CD14-positive monocyte (primary cell): ENCODE measurements at regions of chr1 and their contacts with region 1.

Region 1: GRCh38 chr1:119549719-119550132 is 42.7 kb downstream of the HSD3B1 start:
- DNase-seq: peak; percentile 69 to 72 (median 69)
- H3K4me3 ChIP-seq: no peak overlapping the region
- H3K4me3 Mint-ChIP-seq: no peak overlapping the region
- H3K27ac ChIP-seq: no peak overlapping the region
- H3K27ac Mint-ChIP-seq: peak overlapping the region in 2 of 7 donors; percentile 2 to 22
- H3K4me1 ChIP-seq: peaks cover 16 to 34% of the 10 kb centered on the region in 2 donors
- H3K4me1 Mint-ChIP-seq: peaks cover 31% of the 10 kb centered on the region
- H3K27me3 ChIP-seq: no peaks in the 10 kb centered on the region
- H3K27me3 Mint-ChIP-seq: peaks cover 0 to 4% (median 1%) of the 10 kb centered on the region in 3 donors
- CTCF ChIP-seq: peak; percentile 80

Region 2: GRCh38 chr1:119080586-119080985 is 469.1 kb before region 1 on chr1:
- intact Hi-C with region 1: no loop called
- DNase-seq: no peak
- H3K4me3 ChIP-seq: no peak overlapping the region
- H3K4me3 Mint-ChIP-seq: no peak overlapping the region
- H3K27ac ChIP-seq: no peak overlapping the region
- H3K27ac Mint-ChIP-seq: no peak overlapping the region
- H3K4me1 ChIP-seq: no peaks in the 10 kb centered on the region
- H3K4me1 Mint-ChIP-seq: peaks cover 3% of the 10 kb centered on the region
- H3K27me3 ChIP-seq: no peaks in the 10 kb centered on the region
- H3K27me3 Mint-ChIP-seq: no peaks in the 10 kb centered on the region
- CTCF ChIP-seq: no peak

Region 3: DNA sequence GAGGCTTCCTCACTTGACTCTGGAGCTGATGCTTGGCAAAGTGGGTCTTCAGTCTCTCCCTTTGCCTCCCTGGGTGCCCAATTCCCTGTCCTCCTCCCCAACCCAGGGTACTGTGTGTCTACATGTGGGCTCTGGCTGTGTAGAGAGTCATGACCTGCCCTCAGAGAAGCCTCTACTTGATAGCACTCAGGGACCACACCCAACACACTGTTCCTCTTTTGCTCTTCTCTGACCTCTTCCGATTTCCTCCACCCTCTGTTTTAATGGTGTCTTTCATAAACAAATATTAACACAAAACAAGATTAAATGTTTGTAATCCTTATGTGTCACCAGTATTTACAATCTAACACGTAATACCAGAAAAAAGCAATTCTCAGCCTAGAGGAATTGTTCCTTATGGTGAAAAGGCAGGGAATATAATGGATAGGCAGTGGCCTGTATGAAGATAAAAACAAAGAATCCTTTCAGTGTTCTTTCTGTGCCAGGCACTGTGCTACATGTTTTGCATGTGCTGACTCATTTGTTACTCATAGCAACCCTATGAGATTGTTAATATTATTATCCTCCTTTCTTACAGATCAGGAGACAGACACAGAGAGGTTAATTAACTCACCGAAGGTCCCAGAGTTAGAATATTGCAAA is 15.5 kb after region 1 on chr1:
- intact Hi-C with region 1: loop called in 1 of 2 experiments (anchors 2 kb)
- DNase-seq: peak; percentile 77 to 86 (median 79)
- H3K4me3 ChIP-seq: peak overlapping the region; percentile 5 to 64 (median 16)
- H3K4me3 Mint-ChIP-seq: peak overlapping the region; percentile 14 to 78
- H3K27ac ChIP-seq: peak overlapping the region; percentile 85 to 94
- H3K27ac Mint-ChIP-seq: peak overlapping the region; percentile 82 to 96 (median 92)
- H3K4me1 ChIP-seq: peaks cover 68 to 73% of the 10 kb centered on the region in 2 donors
- H3K4me1 Mint-ChIP-seq: peaks cover 70% of the 10 kb centered on the region
- H3K27me3 ChIP-seq: no peaks in the 10 kb centered on the region
- H3K27me3 Mint-ChIP-seq: no peaks in the 10 kb centered on the region
- CTCF ChIP-seq: no peak

Region 4: DNA sequence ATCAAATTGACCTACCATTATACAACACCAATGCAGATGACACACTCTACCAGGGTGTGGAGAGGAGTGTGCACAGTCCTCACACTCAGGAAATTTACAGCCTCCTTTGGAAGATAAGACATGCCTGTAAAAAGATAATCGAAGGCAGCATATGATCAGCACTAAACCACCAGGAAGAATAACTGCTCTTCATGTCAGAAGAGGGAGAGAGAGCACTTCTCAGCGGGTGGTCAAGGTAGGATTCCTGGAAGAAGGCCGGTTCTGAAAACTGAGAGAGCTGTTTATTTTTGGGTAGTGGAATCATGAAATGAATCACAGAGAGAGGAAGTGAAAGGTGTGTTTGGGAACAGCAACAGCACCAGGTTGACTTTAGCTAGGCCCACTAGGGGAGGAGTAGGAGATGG is 112.3 kb after region 1 on chr1:
- intact Hi-C with region 1: loop called in 1 of 2 experiments (anchors 5 kb)
- DNase-seq: no peak
- H3K4me3 ChIP-seq: no peak overlapping the region
- H3K4me3 Mint-ChIP-seq: no peak overlapping the region
- H3K27ac ChIP-seq: no peak overlapping the region
- H3K27ac Mint-ChIP-seq: no peak overlapping the region
- H3K4me1 ChIP-seq: no peaks in the 10 kb centered on the region
- H3K4me1 Mint-ChIP-seq: no peaks in the 10 kb centered on the region
- H3K27me3 ChIP-seq: no peaks in the 10 kb centered on the region
- H3K27me3 Mint-ChIP-seq: peaks cover 2 to 7% (median 6%) of the 10 kb centered on the region in 3 donors
- CTCF ChIP-seq: no peak

Region 5: DNA sequence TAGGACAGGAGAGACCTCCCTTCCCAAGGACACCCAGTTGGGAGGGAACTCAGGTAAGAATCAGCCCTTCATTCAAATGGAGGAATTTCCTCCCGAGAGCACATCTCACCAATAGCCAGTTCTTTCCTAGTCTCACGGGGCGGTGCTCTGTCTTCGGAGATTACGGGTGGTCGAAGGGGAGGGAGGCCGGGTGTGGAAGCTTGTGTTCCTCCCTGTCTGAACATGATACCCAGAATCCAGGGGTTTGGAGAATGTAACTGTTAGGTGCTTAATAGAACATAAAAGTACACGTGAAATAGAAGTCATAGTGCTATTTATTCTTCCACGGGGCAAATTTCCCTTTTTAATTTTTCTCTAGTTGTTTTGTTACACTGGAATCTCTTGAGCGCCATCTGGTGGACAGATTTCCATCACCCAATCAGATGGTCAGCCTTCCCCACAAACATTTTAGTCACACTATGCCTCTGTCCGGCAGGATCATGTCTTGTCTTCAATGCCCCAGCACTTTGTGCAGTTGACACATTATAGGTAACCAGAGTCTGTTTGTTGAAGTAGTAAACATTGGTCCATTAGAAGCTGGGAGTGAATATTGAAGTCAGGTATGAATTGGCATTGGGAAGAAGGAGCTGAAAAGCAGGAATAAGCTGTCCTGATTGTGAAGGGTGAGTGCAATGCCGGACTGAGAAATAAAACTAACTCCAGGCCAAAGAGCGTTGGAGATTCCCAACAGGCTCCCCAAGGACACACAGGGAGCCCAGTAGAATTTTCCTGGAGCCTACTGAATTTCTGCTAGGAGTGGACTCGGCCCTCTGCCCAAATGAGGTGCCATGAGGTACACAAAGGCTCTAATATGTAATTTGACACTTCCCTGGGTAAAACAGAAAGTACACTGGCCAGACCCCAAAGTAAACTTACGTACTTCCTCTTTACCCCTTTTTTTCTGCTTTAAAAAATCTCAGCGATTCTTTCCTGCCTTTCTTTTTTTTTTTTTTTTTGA is 125.9 kb after region 1 on chr1:
- intact Hi-C with region 1: loop called in 1 of 2 experiments (anchors 10 kb)
- DNase-seq: peak; percentile 74 to 83 (median 82)
- H3K4me3 ChIP-seq: peak overlapping the region in 2 of 3 experiments; percentile 49 to 70
- H3K4me3 Mint-ChIP-seq: peak overlapping the region; percentile 76 to 89
- H3K27ac ChIP-seq: no peak overlapping the region
- H3K27ac Mint-ChIP-seq: peak overlapping the region in 5 of 7 donors; percentile 53 to 86 (median 72)
- H3K4me1 ChIP-seq: peaks cover 7 to 9% of the 10 kb centered on the region in 2 donors
- H3K4me1 Mint-ChIP-seq: peaks cover 13% of the 10 kb centered on the region
- H3K27me3 ChIP-seq: no peaks in the 10 kb centered on the region
- H3K27me3 Mint-ChIP-seq: peaks cover 1 to 12% (median 4%) of the 10 kb centered on the region in 3 donors
- CTCF ChIP-seq: peak; percentile 67